Spleen (tissue), 13 donors: ENCODE measurements at regions of chr6 and their contacts with region 1.

Region 1: DNA sequence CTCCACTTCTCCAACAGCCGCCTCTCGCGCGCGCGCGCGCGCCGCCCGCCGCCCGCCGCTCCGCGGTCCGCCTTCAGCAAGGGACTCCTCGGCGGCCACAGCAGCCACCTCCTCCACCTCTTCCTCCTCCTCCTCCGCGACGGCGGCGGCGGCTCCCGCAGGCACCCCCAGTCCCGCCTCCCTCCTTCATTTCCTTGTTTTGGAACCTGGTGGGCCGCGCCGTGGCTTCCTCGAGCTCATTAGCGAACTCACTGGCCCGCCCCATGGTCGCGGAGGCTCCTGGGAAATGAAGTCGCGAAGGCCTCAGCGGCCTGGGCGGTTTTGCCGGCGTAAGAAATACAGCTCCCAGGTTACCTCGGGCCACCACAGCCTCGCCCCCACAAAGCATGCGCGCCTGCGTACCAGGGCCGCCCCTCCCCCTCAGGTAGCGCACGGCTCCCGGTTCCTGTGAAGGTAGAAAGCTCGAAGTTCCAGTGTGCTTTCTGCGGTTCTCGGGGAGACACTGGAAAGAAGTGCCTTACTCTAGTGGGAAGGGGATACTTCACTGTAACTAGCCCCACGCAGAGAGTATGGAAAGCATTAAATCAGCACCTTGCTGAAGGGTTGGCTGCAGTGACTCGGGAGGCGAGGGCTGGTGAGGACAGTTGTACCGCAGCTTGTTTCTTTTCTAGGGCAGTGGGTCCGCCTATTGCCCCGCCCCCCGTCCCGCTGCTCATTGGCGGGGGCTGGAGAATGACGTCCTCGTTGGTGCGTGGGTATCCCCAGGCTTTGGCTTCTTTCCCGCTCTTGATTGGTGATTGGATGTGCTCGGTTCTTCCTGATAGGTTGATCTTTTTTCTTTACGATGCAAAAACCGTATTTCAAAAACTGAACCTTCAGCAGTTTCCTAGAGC is at the start of gene CDK19:
- DNase-seq: peak; percentile 100
- H3K4me3 ChIP-seq: peak within 1 kb of the TSS; percentile 72 to 95 (median 84)
- H3K27ac ChIP-seq: peak within 1 kb of the TSS; percentile 92 to 99 (median 98)
- H3K4me1 ChIP-seq: peaks cover 15 to 52% (median 36%) of the 10 kb centered on the region in 6 donors
- H3K27me3 ChIP-seq: no peaks in the 10 kb centered on the region
- CTCF ChIP-seq: peak in 3 of 11 experiments; percentile 7 to 30 (median 23)
- POLR2A ChIP-seq: peak in 2 of 3 donors; percentile 88 to 92
- total RNA-seq, gene CDK19: 19.0 to 29.8 (median 24.2) TPM

Region 2: DNA sequence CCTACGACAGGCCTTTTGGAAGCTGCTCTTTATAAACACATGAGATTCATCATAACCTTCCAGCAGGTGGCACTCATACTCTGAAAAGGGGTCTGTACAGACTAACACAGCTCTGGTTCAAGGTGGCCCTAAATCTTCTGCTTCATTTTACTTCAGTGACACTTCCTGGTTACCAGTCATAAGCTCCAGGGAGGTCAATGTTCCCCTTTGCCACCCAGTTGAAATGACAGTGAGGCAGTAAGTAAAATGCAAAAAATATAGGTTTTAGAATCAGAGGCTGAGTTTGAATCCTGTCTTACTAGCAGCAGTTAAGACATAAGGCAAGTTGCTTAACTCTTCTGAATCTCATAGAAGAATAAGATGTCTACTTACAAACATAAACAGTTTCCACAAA is 133.0 kb before region 1 on chr6:
- intact Hi-C with region 1: loop called (anchors 10 kb)
- DNase-seq: no peak
- H3K4me3 ChIP-seq: no peak overlapping the region
- H3K27ac ChIP-seq: peak overlapping the region in 3 of 8 donors; percentile 13 to 54 (median 27)
- H3K4me1 ChIP-seq: peaks cover 7 to 36% (median 22%) of the 10 kb centered on the region in 6 donors
- H3K27me3 ChIP-seq: no peaks in the 10 kb centered on the region
- CTCF ChIP-seq: peak; percentile 44 to 84 (median 69)
- POLR2A ChIP-seq: no peak

Region 3: DNA sequence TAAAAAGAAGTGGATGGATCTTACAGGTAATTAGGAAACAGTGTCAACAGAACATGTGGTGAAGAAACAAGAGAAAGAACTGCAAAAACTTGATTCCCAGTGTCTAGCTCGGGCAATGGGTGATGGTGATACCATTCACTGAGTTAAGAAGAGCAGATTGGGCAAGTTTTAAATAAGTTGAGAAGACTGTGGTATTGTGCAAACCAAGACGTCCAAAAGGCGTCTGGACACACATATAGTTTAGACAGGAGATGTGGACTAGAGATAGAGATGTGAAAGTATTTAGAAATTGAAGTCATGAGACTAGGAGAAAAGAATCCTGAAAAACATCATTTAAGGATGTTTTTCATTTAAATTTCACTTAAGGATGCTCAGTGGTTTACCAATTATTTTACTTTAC is 54.1 kb before region 1 on chr6:
- intact Hi-C with region 1: no loop called
- DNase-seq: no peak
- H3K4me3 ChIP-seq: no peak overlapping the region
- H3K27ac ChIP-seq: no peak overlapping the region
- H3K4me1 ChIP-seq: peaks cover 0 to 12% (median 0%) of the 10 kb centered on the region in 6 donors
- H3K27me3 ChIP-seq: no peaks in the 10 kb centered on the region
- CTCF ChIP-seq: no peak
- POLR2A ChIP-seq: no peak

Region 4: GRCh38 chr6:110876170-110876773 is 60.8 kb after region 1 on chr6:
- intact Hi-C with region 1: loop called (anchors 1 kb)
- DNase-seq: peak; percentile 94
- H3K4me3 ChIP-seq: peak overlapping the region; percentile 84 to 96 (median 92)
- H3K27ac ChIP-seq: peak overlapping the region; percentile 93 to 97 (median 96)
- H3K4me1 ChIP-seq: peaks cover 30 to 64% (median 58%) of the 10 kb centered on the region in 6 donors
- H3K27me3 ChIP-seq: no peaks in the 10 kb centered on the region
- CTCF ChIP-seq: peak in 1 of 11 experiments; percentile 9
- POLR2A ChIP-seq: peak in 1 of 3 donors; percentile 72

Region 5: DNA sequence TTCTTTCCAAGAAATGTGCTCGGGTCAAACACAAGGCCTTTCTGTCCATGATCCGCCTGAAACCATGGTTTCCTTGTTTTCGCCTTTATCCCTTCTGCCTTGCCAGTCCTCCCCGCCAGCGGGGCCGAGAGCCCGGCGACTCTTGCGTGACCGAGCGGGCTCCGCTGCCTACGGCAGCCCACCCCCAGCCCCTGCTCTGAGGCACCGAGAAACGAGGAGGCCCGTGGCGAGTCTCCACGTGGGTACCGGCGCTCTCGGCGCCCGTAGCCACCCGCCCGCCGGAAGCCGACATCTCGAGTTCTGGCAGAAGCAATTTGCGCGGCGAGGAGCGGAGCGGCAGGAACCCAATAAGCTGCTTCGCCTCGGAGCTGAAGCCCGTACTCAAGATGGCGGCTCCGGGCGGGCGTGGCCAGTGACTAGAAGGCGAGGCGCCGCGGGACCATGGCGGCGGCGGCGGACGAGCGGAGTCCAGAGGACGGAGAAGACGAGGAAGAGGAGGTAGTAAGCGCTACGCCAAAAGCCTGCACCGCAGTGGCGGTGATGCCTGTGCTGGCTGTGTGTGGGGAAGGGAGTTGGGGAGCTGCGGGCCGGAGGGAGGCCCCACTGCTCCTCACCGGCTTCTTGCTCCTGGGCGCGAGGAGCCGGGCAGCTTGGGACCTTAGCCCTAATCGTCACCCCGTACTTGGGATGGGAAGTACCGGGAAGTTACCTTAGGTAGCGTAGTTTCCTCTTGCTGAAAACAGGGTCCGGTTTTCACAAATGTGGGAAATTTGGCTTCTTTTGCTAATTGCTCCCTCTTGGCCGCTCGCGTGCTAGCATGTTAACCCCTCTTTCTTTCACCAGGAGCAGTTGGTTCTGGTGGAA is 143.1 kb after region 1 on chr6 and contains the start of gene GTF3C6:
- intact Hi-C with region 1: loop called (anchors 10 kb)
- DNase-seq: peak; percentile 99
- H3K4me3 ChIP-seq: peak within 1 kb of the TSS; percentile 60 to 89 (median 72)
- H3K27ac ChIP-seq: peak within 1 kb of the TSS; percentile 91 to 95 (median 93)
- H3K4me1 ChIP-seq: peaks cover 0 to 28% (median 19%) of the 10 kb centered on the region in 6 donors
- H3K27me3 ChIP-seq: no peaks in the 10 kb centered on the region
- CTCF ChIP-seq: peak in 2 of 11 experiments; percentile 4
- POLR2A ChIP-seq: peak in 1 of 3 donors; percentile 64
- total RNA-seq, gene GTF3C6: 27.7 to 54.5 (median 45.3) TPM